ENCODE measurements at regions of chr18 and their contacts with region 1.

Region 1: GRCh38 chr18:58781627-58782194 is 83.0 kb upstream of the ZNF532 start:
- DNase-seq: peak; percentile 59
- ATAC-seq: peak; percentile 95
- H3K4me3 ChIP-seq: no peak overlapping the region
- H3K27ac ChIP-seq: no peak overlapping the region
- H3K4me1 ChIP-seq: 0 out of 2 replicates have a peak, but pooled peaks cover 5% of the 10 kb centered on the region
- H3K27me3 ChIP-seq: peaks cover 0 to 13% of the 10 kb centered on the region in 2 experiments; a peak in 4 of 5 replicates
- CTCF ChIP-seq: peak; percentile 97
- EP300 ChIP-seq: no peak
- POLR2A ChIP-seq: no peak
- RAD21 ChIP-seq: peak; percentile 82

Region 2: GRCh38 chr18:59056706-59057492 is 275.2 kb after region 1 on chr18:
- CTCF ChIA-PET with region 1: interaction called, 23 read pairs
- POLR2A ChIA-PET with region 1: no interaction called
- in situ Hi-C with region 1: loop called (anchors 10 kb)
- intact Hi-C with region 1: loop called (anchors 1 kb)
- DNase-seq: peak; percentile 36
- ATAC-seq: peak; percentile 81
- H3K4me3 ChIP-seq: no peak overlapping the region
- H3K27ac ChIP-seq: no peak overlapping the region
- H3K4me1 ChIP-seq: no peaks in the 10 kb centered on the region
- H3K27me3 ChIP-seq: peaks cover 0 to 27% of the 10 kb centered on the region in 2 experiments; a peak in 3 of 5 replicates
- CTCF ChIP-seq: peak; percentile 83
- EP300 ChIP-seq: no peak
- POLR2A ChIP-seq: no peak
- RAD21 ChIP-seq: peak; percentile 67

Region 3: GRCh38 chr18:59070181-59070912 is 288.6 kb after region 1 on chr18:
- CTCF ChIA-PET with region 1: interaction called, 28 read pairs
- POLR2A ChIA-PET with region 1: no interaction called
- in situ Hi-C with region 1: no loop called
- intact Hi-C with region 1: loop called (anchors 1 kb)
- DNase-seq: peak; percentile 54
- ATAC-seq: peak; percentile 95
- H3K4me3 ChIP-seq: no peak overlapping the region
- H3K27ac ChIP-seq: no peak overlapping the region
- H3K4me1 ChIP-seq: no peaks in the 10 kb centered on the region
- H3K27me3 ChIP-seq: no peaks in the 10 kb centered on the region
- CTCF ChIP-seq: peak; percentile 86
- EP300 ChIP-seq: peak in 1 of 2 experiments; percentile 13; a peak in 1 of 4 replicates
- POLR2A ChIP-seq: no peak
- RAD21 ChIP-seq: peak; percentile 52

Measured in HepG2 (cell line).